Pancreas (tissue), 10 donors: ENCODE measurements at regions of chr15 and their contacts with region 1.

Region 1: DNA sequence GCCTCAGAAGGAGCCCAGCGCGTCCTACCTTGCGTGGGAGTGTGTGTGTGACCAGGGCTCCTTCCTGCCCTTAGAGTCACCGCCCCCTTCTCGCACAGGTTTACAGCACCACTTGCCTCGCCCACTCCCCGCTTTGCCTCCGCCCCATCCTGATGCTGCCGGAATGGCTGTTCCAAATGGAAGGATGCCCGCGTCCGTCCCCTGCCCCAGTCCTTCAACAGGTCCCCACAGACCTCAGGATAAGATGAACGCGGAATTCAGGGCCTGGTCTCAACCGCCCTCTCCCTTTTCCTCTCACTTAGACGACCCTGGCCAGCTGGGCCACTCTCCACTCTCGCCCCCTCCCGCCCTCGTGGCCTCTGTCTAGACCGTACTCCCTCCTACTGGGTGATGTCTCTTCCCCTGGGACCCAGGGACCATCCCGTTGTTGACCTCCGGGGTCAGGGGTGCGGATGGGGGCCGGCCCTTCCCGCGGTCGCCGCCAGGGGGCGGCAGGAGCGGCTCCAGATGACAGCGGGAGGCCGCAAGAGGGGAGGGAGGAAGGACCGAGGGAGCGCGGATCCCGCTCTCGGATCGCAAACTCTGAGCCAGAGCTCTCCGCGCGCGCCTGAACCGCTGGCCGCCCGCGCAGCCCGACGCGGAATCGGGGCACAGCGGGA is at the start of gene THSD4:
- DNase-seq: peak; percentile 56 to 89 (median 74)
- ATAC-seq: peak; percentile 80 to 87 (median 86)
- H3K4me3 ChIP-seq: peak within 1 kb of the TSS; percentile 21 to 55 (median 52)
- H3K27ac ChIP-seq: peak within 1 kb of the TSS; percentile 46 to 82 (median 62)
- H3K4me1 ChIP-seq: no peaks in the 10 kb centered on the region
- H3K27me3 ChIP-seq: no peaks in the 10 kb centered on the region
- CTCF ChIP-seq: peak; percentile 84 to 98 (median 95)
- total RNA-seq, gene THSD4: 6.0 to 17.8 (median 14.2) TPM

Region 2: GRCh38 chr15:71003319-71003718 is 111.7 kb before region 1 on chr15:
- intact Hi-C with region 1: no loop called
- DNase-seq: no peak
- ATAC-seq: no peak
- H3K4me3 ChIP-seq: no peak overlapping the region
- H3K27ac ChIP-seq: no peak overlapping the region
- H3K4me1 ChIP-seq: no peaks in the 10 kb centered on the region
- H3K27me3 ChIP-seq: no peaks in the 10 kb centered on the region
- CTCF ChIP-seq: no peak

Region 3: DNA sequence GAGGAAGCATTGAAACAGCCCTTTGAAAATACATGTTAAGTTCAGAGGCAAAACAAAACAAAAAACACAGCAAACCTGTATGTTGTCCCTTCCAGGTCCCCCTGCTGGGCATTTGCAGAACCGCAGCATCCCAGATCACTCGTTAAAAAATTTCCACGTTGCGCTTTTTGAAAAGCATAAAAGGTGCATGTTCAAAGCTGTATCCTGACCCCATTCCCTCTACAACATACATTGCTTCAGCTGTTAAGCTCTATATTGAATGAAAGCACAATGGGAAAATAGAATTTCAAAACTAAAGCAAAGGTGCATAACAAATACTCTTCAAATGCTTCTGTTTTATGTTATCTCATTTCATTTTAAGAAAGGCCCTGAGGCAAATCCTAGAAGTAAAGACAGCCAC is 328.5 kb after region 1 on chr15:
- intact Hi-C with region 1: loop called in 2 of 3 experiments (anchors 5 to 10 kb)
- DNase-seq: peak in 4 of 6 donors; percentile 14 to 84 (median 47)
- ATAC-seq: peak; percentile 39 to 66 (median 62)
- H3K4me3 ChIP-seq: no peak overlapping the region
- H3K27ac ChIP-seq: no peak overlapping the region
- H3K4me1 ChIP-seq: no peaks in the 10 kb centered on the region
- H3K27me3 ChIP-seq: no peaks in the 10 kb centered on the region
- CTCF ChIP-seq: peak; percentile 63 to 89 (median 74)

Region 4: DNA sequence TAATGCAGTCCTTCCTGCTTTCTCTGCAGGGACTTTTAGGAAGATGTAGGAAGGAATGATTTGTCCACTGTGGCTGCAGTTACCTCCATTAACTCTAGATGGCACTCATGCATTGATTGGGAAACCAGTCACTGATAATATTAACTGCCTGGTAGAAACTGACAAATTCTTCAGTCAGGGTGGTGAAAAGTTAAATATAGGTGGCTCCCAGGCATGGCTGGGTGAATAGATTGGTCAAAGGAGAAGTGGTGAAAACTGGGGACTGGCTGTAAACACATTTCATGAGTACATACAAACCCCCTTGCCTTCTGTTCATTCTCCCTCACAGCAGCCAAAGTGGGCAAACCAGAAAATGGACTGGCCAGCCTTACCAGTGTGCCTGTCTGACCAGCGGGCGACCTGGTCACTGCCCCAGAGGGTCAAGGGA is 333.7 kb after region 1 on chr15:
- intact Hi-C with region 1: loop called in 2 of 3 experiments (anchors 5 to 10 kb)
- DNase-seq: peak in 3 of 6 donors; percentile 24 to 70 (median 44)
- ATAC-seq: peak; percentile 76 to 93 (median 86)
- H3K4me3 ChIP-seq: no peak overlapping the region
- H3K27ac ChIP-seq: no peak overlapping the region
- H3K4me1 ChIP-seq: no peaks in the 10 kb centered on the region
- H3K27me3 ChIP-seq: no peaks in the 10 kb centered on the region
- CTCF ChIP-seq: peak; percentile 51 to 90 (median 79)